ENCODE measurements at regions of chr17 and their contacts with region 1.

Region 1: GRCh38 chr17:7851438-7852256 is 3.2 kb upstream of the TMEM88 start:
- H3K4me3 Mint-ChIP-seq: peak overlapping the region; percentile 20
- H3K27ac Mint-ChIP-seq: peak overlapping the region; percentile 31
- H3K4me1 Mint-ChIP-seq: peaks cover 55% of the 10 kb centered on the region
- H3K27me3 Mint-ChIP-seq: no peaks in the 10 kb centered on the region

Region 2: DNA sequence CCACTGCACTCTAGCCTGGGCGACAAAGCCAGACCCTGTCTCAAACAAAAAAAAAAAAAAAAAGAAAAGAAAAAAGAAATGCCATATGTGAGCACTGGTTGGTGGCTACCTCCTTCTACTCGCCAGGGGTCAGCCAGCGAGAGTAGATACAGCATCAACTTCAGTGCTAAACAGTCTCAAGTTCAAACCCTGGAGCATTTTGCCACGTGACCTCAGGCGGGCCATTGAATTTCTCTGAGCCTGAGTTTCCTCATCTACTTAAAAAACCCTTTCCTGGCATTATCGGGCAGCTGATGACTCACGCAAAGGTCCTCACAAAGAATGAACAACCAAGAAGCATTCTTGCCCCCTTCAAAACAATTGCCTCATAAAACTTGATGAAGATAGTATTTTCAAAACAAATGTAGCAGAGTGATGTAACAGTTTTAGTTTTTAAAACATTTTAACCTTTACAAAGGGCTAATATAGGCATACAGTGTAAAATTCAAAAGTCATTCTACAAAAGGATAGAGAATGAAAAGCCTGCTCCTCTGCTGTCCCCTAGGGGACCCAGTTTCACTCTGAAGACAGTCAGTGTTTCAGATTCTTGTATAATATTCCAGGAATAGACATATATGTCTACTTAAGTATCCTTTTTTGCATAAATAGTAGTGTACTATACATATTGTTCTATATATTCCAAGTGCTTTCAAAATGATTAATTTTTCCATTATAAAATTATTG is 105.7 kb before region 1 on chr17:
- intact Hi-C with region 1: loop called (anchors 5 kb)
- H3K4me3 Mint-ChIP-seq: no peak overlapping the region
- H3K27ac Mint-ChIP-seq: no peak overlapping the region
- H3K4me1 Mint-ChIP-seq: no peaks in the 10 kb centered on the region
- H3K27me3 Mint-ChIP-seq: peaks cover 3% of the 10 kb centered on the region

Region 3: DNA sequence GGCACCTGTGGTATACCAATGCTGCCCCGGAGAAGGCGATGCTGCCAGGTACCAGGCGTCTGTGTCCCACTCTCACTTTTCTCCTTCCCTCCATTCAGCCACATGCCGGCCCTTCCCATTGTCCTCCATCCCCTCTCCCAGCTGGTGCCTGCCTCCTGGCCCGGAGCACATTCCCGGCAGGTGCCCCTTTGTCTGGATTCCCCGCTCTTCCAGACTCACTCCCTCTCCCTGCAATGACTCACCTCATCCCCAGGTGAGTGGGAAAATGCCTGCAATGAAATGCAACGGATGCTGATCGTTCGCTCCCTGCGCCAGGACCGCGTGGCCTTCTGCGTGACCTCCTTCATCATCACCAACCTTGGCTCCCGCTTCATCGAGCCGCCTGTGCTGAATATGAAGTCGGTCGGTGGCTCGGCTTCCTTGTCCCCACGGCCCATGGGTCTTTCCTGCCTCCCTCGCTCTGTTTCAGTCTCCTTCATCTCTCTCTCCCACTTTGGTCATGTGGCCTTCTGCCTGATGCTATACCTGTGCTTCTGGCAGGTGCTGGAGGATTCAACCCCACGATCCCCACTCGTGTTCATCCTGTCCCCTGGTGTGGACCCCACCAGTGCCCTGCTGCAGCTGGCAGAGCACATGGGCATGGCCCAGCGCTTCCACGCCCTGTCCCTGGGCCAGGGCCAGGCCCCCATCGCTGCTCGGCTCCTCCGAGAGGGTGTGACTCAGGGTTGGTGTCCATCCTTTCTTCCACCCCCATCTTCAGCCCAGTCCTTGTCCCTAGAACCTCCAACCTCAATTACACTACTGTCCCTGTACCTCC is 27.9 kb before region 1 on chr17:
- intact Hi-C with region 1: loop called (anchors 1 kb)
- H3K4me3 Mint-ChIP-seq: no peak overlapping the region
- H3K27ac Mint-ChIP-seq: no peak overlapping the region
- H3K4me1 Mint-ChIP-seq: peaks cover 10% of the 10 kb centered on the region
- H3K27me3 Mint-ChIP-seq: peaks cover 29% of the 10 kb centered on the region

Region 4: DNA sequence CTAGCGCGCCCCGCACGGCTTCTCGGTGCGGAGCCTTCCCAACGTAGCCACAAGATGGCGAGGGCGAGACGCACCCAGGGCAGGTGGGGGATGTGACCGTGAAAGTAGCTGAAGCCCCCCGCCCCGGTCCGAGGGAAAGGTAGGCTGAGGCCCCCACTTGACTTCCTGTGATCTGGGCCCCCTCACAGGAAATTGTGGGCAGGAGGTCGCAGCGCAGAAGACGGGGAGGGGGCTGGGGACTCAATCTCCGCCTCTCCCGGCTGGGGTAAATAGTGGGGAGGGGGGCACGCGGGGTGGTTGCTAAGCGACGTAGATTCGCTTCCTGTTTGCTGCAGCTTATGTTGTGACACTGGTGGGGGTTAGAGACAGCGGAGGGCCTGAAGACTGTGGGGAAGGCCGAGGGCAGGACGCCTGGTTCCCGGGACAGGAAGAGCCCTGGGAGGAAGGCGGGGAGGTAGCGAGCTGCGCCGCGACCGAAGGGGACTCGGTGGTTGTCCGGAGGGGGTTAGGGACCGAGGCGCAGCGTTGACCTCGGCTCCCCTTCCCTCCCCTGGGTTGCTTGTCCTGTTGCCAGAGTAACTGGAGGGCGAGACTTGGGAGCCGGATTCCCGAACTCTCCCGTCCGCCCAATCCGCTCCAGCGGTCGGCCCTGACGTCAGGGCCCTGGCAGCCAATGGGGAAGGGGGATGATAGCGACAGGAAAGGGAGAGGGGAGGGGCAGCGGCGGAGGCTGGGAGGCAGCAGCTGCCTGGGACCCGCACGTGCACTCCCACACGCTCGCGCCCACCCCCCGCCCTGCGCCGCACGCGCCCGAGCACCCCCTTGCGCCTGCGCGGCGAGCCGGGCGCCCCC is 16.5 kb before region 1 on chr17:
- intact Hi-C with region 1: loop called (anchors 2 kb)
- H3K4me3 Mint-ChIP-seq: peak overlapping the region; percentile 87
- H3K27ac Mint-ChIP-seq: peak overlapping the region; percentile 98
- H3K4me1 Mint-ChIP-seq: peaks cover 62% of the 10 kb centered on the region
- H3K27me3 Mint-ChIP-seq: peaks cover 23% of the 10 kb centered on the region

Region 5: GRCh38 chr17:7915611-7916382 is 64.2 kb after region 1 on chr17 and contains the start of gene RNF227:
- intact Hi-C with region 1: no loop called
- H3K4me3 Mint-ChIP-seq: peak within 1 kb of the TSS; percentile 98
- H3K27ac Mint-ChIP-seq: peak within 1 kb of the TSS; percentile 94
- H3K4me1 Mint-ChIP-seq: peaks cover 44% of the 10 kb centered on the region
- H3K27me3 Mint-ChIP-seq: no peaks in the 10 kb centered on the region

Measured in dendritic cell treated with granulocyte-macrophage colony-stimulating factor and Interleukin-4, amounts not matched to agents 40 ng/mL and 50 ng/mL, for 4 days (primary cell).